H1 (cell line): ENCODE measurements at regions of chr5 and their contacts with region 1.

Region 1: DNA sequence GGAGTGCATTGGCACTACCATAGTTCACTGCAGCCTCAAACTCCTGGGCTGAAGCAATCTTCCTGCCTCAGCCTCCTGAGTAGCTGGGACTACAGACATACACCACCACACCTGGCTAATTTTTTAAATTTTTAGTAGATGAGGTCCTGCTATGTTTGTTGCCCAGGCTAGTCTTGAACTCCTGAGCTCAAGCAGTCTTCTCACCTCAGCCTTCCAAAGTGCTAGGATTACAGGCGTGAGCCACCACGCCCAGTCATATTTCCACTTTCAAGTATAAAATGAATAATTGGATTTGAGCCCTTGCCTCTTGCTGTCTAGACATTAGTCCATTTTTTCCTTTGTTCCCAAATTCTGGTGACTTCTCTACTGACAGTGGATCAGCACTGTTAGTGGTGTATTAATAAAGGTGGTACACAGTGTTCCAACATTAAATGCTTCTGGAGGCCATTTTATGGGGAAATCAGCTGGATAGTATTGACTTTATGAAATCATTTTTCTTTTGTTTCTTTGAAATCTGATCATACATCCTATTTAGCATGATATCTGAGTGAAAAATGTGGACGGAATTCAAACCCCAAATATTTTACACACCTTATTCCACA is 15.9 kb downstream of the ATP6V0E1 start:
- DNase-seq: no peak
- H3K4me3 ChIP-seq: no peak overlapping the region
- H3K27ac ChIP-seq: no peak overlapping the region
- H3K4me1 ChIP-seq: 0 out of 7 replicates have a peak, but pooled peaks cover 0 to 2% (median 0%) of the 10 kb centered on the region in 4 experiments
- H3K27me3 ChIP-seq: no peaks in the 10 kb centered on the region
- CTCF ChIP-seq: no peak
- EP300 ChIP-seq: no peak
- POLR2A ChIP-seq: no peak
- RAD21 ChIP-seq: no peak

Region 2: GRCh38 chr5:173010547-173011464 is 11.3 kb after region 1 on chr5:
- CTCF ChIA-PET with region 1: interaction called, 11 read pairs
- POLR2A ChIA-PET with region 1: interaction called, 4 read pairs
- DNase-seq: peak in 1 of 2 experiments; percentile 55
- H3K4me3 ChIP-seq: no peak overlapping the region
- H3K27ac ChIP-seq: no peak overlapping the region
- H3K4me1 ChIP-seq: peaks cover 0 to 3% (median 0%) of the 10 kb centered on the region in 4 experiments; a peak in 1 of 7 replicates
- H3K27me3 ChIP-seq: no peaks in the 10 kb centered on the region
- CTCF ChIP-seq: peak; percentile 44 to 61 (median 53)
- EP300 ChIP-seq: no peak
- POLR2A ChIP-seq: no peak
- RAD21 ChIP-seq: peak; percentile 71 to 78

Region 3: GRCh38 chr5:173090639-173091038 is 91.2 kb after region 1 on chr5:
- CTCF ChIA-PET with region 1: no interaction called
- POLR2A ChIA-PET with region 1: no interaction called
- DNase-seq: no peak
- H3K4me3 ChIP-seq: no peak overlapping the region
- H3K27ac ChIP-seq: no peak overlapping the region
- H3K4me1 ChIP-seq: no peaks in the 10 kb centered on the region
- H3K27me3 ChIP-seq: no peaks in the 10 kb centered on the region
- CTCF ChIP-seq: no peak
- EP300 ChIP-seq: no peak
- POLR2A ChIP-seq: no peak
- RAD21 ChIP-seq: no peak